ENCODE measurements at regions of chr18 and their contacts with region 1.

Region 1: DNA sequence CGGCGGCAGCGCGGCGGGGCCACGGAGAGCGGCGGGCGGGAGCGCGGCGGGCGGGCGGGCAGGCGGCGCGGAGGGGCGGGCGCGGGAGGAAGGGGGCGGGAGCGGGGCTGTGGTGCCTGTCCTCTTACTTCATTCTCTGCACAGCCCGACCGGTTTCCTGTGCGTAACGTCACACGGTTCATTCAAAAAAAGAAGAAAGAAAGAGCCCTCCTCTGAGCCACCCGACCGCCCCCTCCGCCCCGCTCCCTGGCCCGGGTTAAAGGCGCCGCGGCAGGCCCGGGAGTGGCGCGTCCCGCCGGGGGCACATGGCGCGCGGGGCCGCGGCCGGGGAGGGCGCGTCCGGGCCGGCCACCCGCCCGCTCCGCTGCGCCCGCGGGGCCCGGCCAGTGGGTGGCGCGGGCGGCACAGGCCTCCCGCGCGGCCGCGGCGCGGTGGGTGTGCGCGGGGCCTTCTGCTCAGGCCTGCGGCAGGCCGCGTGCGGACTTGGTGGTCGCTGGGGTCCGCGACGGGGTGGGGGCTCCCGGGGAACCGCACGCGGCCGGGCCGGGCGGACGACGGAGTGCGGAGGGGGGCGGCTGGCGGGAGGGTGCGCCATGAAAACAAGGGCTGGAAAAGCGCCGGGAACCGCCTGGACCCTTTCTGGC is 599 bp upstream of the BCL2 start:
- DNase-seq: peak; percentile 89
- H3K4me3 Mint-ChIP-seq: peak overlapping the region; percentile 83
- H3K27ac Mint-ChIP-seq: peak overlapping the region; percentile 83
- H3K4me1 Mint-ChIP-seq: peaks cover 26% of the 10 kb centered on the region
- H3K27me3 Mint-ChIP-seq: no peaks in the 10 kb centered on the region

Region 2: DNA sequence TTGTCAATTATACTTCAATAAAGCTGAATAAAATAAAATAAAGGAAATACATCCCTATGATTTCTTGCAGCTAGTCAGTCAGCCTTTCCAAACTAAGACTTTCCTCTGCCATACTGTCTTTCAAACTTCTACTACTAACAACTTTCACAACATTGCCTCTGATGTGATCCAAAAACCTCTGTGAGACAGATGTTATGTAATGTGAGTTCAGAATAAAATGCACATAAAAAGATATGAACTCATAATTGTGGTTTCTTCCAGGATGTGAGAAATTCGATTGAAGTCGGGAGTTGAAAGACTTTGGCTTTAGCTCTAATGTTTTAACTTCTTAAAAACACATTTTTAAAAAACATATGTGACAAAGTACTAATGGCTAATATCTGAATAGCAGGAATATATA is 1232.0 kb before region 1 on chr18:
- CTCF ChIA-PET with region 1: no interaction called
- POLR2A ChIA-PET with region 1: no interaction called
- intact Hi-C with region 1: no loop called
- DNase-seq: no peak
- H3K4me3 Mint-ChIP-seq: no peak overlapping the region
- H3K27ac Mint-ChIP-seq: no peak overlapping the region
- H3K4me1 Mint-ChIP-seq: peaks cover 22% of the 10 kb centered on the region
- H3K27me3 Mint-ChIP-seq: no peaks in the 10 kb centered on the region

Region 3: GRCh38 chr18:63105636-63106316 is 214.4 kb before region 1 on chr18:
- CTCF ChIA-PET with region 1: interaction called, 6 read pairs
- POLR2A ChIA-PET with region 1: interaction called, 7 read pairs
- intact Hi-C with region 1: loop called (anchors 2 kb)
- DNase-seq: peak; percentile 31
- H3K4me3 Mint-ChIP-seq: no peak overlapping the region
- H3K27ac Mint-ChIP-seq: no peak overlapping the region
- H3K4me1 Mint-ChIP-seq: peaks cover 33% of the 10 kb centered on the region
- H3K27me3 Mint-ChIP-seq: peaks cover under 1% of the 10 kb centered on the region

Region 4: GRCh38 chr18:63155169-63155852 is 164.9 kb before region 1 on chr18:
- CTCF ChIA-PET with region 1: interaction called, 101 read pairs
- POLR2A ChIA-PET with region 1: interaction called, 36 read pairs
- intact Hi-C with region 1: loop called (anchors 1 kb)
- DNase-seq: peak; percentile 91
- H3K4me3 Mint-ChIP-seq: peak overlapping the region; percentile 78
- H3K27ac Mint-ChIP-seq: peak overlapping the region; percentile 98
- H3K4me1 Mint-ChIP-seq: peaks cover 98% of the 10 kb centered on the region
- H3K27me3 Mint-ChIP-seq: no peaks in the 10 kb centered on the region

Region 5: DNA sequence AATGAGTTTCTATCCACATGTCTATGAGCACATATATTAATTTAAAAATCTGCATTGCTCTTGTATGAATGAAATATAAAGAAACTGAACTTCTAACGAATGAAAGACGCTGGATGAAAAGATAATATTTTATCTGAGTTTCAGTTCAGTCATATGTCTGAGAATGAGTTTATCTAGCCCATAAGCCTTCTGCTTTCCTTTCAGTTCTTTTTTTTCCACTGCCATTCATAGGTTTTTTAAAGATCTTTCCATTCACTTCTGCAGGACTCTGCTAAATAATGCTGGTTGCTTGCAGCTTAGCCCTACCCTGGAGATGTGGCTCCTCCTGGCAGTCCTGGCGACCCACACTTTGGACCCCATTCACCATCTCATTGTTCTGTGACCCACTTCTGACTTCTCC is 109.6 kb before region 1 on chr18:
- CTCF ChIA-PET with region 1: interaction called, 31 read pairs
- POLR2A ChIA-PET with region 1: interaction called, 9 read pairs
- intact Hi-C with region 1: loop called (anchors 1 kb)
- DNase-seq: no peak
- H3K4me3 Mint-ChIP-seq: peak overlapping the region; percentile 71
- H3K27ac Mint-ChIP-seq: peak overlapping the region; percentile 93
- H3K4me1 Mint-ChIP-seq: peaks cover 95% of the 10 kb centered on the region
- H3K27me3 Mint-ChIP-seq: no peaks in the 10 kb centered on the region

Region 6: DNA sequence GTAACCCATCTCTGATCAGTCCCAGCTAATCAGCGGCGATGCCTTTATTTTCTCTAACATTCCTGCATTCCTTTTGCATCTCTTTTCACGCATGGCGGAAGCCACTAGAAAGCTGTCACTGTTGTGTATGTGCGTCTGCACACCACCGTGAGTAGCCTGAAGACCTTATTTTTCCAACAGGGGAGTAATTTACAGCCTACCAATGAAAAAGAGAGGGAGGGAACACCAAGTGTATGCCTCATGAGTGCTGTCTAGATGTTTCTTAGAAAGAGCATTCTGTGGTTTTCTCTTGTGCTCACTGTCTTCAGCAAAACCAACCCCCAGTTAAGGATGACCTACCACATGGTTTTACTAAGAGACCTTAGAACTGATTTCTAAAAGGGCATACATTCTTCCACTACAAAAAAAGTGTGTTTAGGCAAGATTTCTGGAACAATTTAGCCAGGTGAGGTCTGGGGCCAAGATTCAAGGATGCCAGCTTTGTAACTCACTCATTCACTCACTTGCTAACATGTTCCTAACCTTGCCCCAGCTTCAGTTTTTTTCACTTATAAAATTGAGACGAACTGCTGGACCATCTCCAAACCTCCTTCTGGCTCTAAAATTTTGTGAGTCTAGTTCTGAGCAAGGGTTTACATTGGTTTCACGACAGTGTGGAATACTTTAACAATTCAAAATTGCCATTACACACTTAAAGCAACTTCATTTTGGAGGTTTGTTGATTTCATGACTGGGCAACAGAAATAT is 52.0 kb before region 1 on chr18:
- CTCF ChIA-PET with region 1: interaction called, 14 read pairs
- POLR2A ChIA-PET with region 1: interaction called, 3 read pairs
- intact Hi-C with region 1: no loop called
- DNase-seq: no peak
- H3K4me3 Mint-ChIP-seq: peak overlapping the region; percentile 2
- H3K27ac Mint-ChIP-seq: peak overlapping the region; percentile 70
- H3K4me1 Mint-ChIP-seq: peaks cover 68% of the 10 kb centered on the region
- H3K27me3 Mint-ChIP-seq: no peaks in the 10 kb centered on the region

Region 7: DNA sequence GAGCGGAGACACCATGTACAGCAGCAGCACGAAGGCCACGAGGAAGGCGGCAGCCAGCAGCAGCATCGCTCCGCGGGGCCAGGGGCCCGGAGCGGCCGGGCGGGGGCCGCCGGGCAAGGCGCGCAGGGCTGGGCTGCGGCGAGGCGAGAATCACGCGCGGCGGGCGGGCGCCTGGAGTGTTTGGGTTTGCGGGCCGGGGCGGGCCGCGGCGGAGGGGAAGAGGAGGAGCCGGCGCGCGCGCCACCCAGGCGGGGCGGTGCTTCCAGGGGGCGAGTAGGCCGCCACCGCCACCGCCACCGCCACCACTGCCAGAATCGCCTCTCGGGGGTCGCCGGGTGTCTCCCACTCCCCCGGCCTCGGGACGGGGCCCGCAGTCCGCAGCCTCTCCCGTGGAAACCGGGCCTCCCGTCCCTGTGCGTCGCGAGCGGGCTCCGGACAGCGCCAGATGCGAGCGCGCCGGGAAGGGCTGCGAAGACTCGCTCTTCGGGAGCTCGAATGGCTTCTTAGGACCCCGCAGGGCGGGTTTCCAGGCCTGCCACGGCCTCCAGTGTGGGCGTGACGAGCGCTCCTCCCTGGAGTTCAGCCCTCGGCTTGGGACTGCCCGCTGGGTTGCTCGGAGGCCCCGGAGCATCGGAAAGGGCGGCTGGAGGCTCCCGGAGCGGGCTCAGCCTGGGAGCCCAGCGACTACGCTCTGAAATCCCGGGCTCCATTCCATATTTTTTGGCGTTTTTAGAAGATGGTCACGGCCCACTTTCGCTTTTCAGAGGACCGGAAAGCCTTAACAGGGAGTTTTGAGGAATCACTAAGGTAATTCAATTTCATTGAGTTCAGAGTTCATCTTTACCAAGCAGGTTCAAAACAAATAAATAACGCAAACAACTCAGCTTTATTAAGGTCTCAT is 47.1 kb after region 1 on chr18 and contains the start of gene KDSR:
- CTCF ChIA-PET with region 1: interaction called, 4 read pairs
- POLR2A ChIA-PET with region 1: no interaction called
- intact Hi-C with region 1: loop called (anchors 5 kb)
- DNase-seq: peak; percentile 89
- H3K4me3 Mint-ChIP-seq: peak within 1 kb of the TSS; percentile 90
- H3K27ac Mint-ChIP-seq: peak within 1 kb of the TSS; percentile 86
- H3K4me1 Mint-ChIP-seq: peaks cover 29% of the 10 kb centered on the region
- H3K27me3 Mint-ChIP-seq: no peaks in the 10 kb centered on the region
- total RNA-seq, gene KDSR: 72.8 to 77.2 TPM

Measured in activated CD4-positive, alpha-beta memory T cell treated with anti-CD3 and anti-CD28 coated beads for 36 hours (primary cell).